ENCODE measurements at regions of chr17 and their contacts with region 1.

Region 1: DNA sequence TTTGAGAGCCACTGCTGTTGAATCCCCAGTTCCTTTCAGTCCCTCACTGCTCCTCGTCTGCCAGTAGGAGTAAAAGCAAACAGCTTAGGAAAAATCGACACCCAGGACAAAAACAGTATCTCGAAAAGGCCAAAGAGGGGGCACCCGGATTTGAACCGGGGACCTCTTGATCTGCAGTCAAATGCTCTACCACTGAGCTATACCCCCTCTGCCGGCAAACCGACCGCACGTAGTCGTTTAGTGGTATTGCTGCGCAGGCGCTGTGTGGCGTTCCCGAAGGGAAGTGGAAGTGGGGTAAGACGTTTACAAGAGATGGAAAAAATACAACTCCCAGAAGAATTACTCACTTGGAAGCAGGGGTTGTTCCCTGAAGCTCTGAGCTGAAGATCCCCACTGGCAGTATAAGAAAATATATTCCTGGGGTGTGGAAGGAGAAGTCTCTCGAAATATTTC is 2.2 kb upstream of the PLXDC1 start:
- DNase-seq: peak; percentile 71
- ATAC-seq: peak; percentile 73
- H3K4me3 ChIP-seq: peak overlapping the region; percentile 87
- H3K27ac ChIP-seq: peak overlapping the region; percentile 62
- H3K4me1 ChIP-seq: peaks cover 8% of the 10 kb centered on the region
- H3K27me3 ChIP-seq: peaks cover 5 to 13% of the 10 kb centered on the region in 2 experiments
- CTCF ChIP-seq: no peak
- EP300 ChIP-seq: no peak; a peak in 1 of 4 replicates
- POLR2A ChIP-seq: no peak
- RAD21 ChIP-seq: no peak

Region 2: GRCh38 chr17:38674749-38675615 is 478.6 kb before region 1 on chr17 and contains the start of gene EPOP:
- CTCF ChIA-PET with region 1: interaction called, 12 read pairs
- POLR2A ChIA-PET with region 1: no interaction called
- RAD21 ChIA-PET with region 1: interaction called, 4 read pairs
- SMC1A ChIA-PET with region 1: no interaction called
- in situ Hi-C with region 1: no loop called
- intact Hi-C with region 1: no loop called
- DNase-seq: no peak
- ATAC-seq: peak; percentile 88
- H3K4me3 ChIP-seq: peak within 1 kb of the TSS; percentile 84
- H3K27ac ChIP-seq: no peak within 1 kb of the TSS
- H3K4me1 ChIP-seq: peaks cover 34% of the 10 kb centered on the region
- H3K27me3 ChIP-seq: peaks cover 8 to 12% of the 10 kb centered on the region in 2 experiments; a peak in 2 of 4 replicates
- CTCF ChIP-seq: no peak
- EP300 ChIP-seq: no peak
- POLR2A ChIP-seq: peak; percentile 62
- RAD21 ChIP-seq: no peak
- polyA plus RNA-seq, gene EPOP: 0.53 to 1.4 TPM

Region 3: GRCh38 chr17:38868817-38869525 is 284.7 kb before region 1 on chr17:
- CTCF ChIA-PET with region 1: interaction called, 15 read pairs
- POLR2A ChIA-PET with region 1: interaction called, 3 read pairs
- RAD21 ChIA-PET with region 1: interaction called, 33 read pairs
- SMC1A ChIA-PET with region 1: interaction called, 23 read pairs
- in situ Hi-C with region 1: no loop called
- intact Hi-C with region 1: loop called (anchors 5 kb)
- DNase-seq: peak; percentile 77
- ATAC-seq: peak; percentile 62
- H3K4me3 ChIP-seq: peak overlapping the region; percentile 87
- H3K27ac ChIP-seq: peak overlapping the region; percentile 98
- H3K4me1 ChIP-seq: peaks cover 19% of the 10 kb centered on the region
- H3K27me3 ChIP-seq: no peaks in the 10 kb centered on the region
- CTCF ChIP-seq: peak; percentile 43 to 49 (median 46)
- EP300 ChIP-seq: peak in 1 of 2 experiments; percentile 46; a peak in 1 of 4 replicates
- POLR2A ChIP-seq: peak; percentile 92
- RAD21 ChIP-seq: 0 out of 2 replicates have a peak, but pooled peaks have one; percentile 16

Region 4: GRCh38 chr17:39057701-39058206 is 95.9 kb before region 1 on chr17:
- CTCF ChIA-PET with region 1: interaction called, 15 read pairs
- POLR2A ChIA-PET with region 1: interaction called, 9 read pairs
- RAD21 ChIA-PET with region 1: interaction called, 19 read pairs
- SMC1A ChIA-PET with region 1: interaction called, 12 read pairs
- in situ Hi-C with region 1: no loop called
- intact Hi-C with region 1: loop called (anchors 1 kb)
- DNase-seq: no peak
- ATAC-seq: no peak
- H3K4me3 ChIP-seq: peak overlapping the region; percentile 43; the same call in 1 of the 2 replicates
- H3K27ac ChIP-seq: no peak overlapping the region
- H3K4me1 ChIP-seq: 0 out of 2 replicates have a peak, but pooled peaks cover 4% of the 10 kb centered on the region
- H3K27me3 ChIP-seq: no peaks in the 10 kb centered on the region
- CTCF ChIP-seq: no peak
- EP300 ChIP-seq: no peak
- POLR2A ChIP-seq: no peak
- RAD21 ChIP-seq: no peak

Region 5: GRCh38 chr17:39164675-39165143 is 11.1 kb after region 1 on chr17:
- CTCF ChIA-PET with region 1: interaction called, 128 read pairs
- POLR2A ChIA-PET with region 1: interaction called, 9 read pairs
- RAD21 ChIA-PET with region 1: interaction called, 40 read pairs
- SMC1A ChIA-PET with region 1: interaction called, 47 read pairs
- in situ Hi-C with region 1: no loop called
- intact Hi-C with region 1: no loop called
- DNase-seq: peak; percentile 53
- ATAC-seq: peak; percentile 98
- H3K4me3 ChIP-seq: peak overlapping the region; percentile 71
- H3K27ac ChIP-seq: no peak overlapping the region
- H3K4me1 ChIP-seq: peaks cover 9% of the 10 kb centered on the region
- H3K27me3 ChIP-seq: peaks cover 0 to 2% of the 10 kb centered on the region in 2 experiments; a peak in 2 of 4 replicates
- CTCF ChIP-seq: peak; percentile 83 to 95 (median 89)
- EP300 ChIP-seq: no peak
- POLR2A ChIP-seq: no peak
- RAD21 ChIP-seq: peak; percentile 33; the same call in 1 of the 2 replicates

Region 6: DNA sequence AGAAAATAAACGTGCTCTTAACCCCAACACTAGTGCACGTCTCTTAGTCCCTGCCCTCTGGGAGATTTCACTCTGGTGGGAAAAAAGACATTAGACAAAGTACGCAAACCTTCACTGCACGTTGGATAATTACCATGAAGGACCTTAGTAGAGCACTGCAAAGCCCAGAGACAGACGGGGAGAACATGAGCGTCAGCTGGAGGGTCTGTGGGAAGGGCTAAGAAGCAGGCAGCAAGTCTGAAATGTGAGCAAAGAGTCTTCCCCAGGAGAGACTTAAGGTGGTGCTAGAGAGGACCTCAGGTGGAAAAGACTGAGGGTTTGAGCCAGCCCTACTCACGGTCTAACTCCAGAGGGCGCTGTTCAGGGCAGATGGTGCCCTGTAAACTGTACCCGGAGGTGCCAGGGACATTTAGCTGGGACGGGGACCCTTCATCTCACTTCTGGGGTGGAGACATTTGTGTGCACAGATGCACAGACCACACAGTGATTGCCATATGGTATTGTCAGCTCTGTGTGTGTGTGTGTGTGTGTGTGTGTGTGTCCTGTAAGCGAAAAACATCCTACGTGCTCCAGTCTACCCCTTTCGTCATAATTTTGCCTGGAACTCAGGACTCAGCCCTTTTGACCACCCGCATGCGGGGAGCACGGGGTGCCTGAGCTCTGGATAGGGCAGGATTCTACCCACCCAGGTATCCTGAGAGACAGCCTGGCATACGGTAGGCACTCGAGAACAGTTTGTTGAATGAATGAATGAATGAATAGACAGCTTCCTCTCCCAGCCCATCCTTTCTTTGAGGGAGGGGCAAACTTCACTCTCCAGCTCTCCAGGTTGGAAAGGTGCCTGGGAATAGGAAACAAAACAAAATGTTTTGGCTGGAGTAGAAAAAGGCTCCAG is 82.2 kb after region 1 on chr17:
- CTCF ChIA-PET with region 1: interaction called, 10 read pairs
- POLR2A ChIA-PET with region 1: no interaction called
- RAD21 ChIA-PET with region 1: interaction called, 5 read pairs
- SMC1A ChIA-PET with region 1: interaction called, 8 read pairs
- in situ Hi-C with region 1: no loop called
- intact Hi-C with region 1: loop called (anchors 5 kb)
- DNase-seq: peak; percentile 24
- ATAC-seq: peak; percentile 88
- H3K4me3 ChIP-seq: no peak overlapping the region
- H3K27ac ChIP-seq: no peak overlapping the region
- H3K4me1 ChIP-seq: no peaks in the 10 kb centered on the region
- H3K27me3 ChIP-seq: no peaks in the 10 kb centered on the region; a peak in 3 of 4 replicates
- CTCF ChIP-seq: peak; percentile 63 to 95 (median 86)
- EP300 ChIP-seq: no peak
- POLR2A ChIP-seq: no peak
- RAD21 ChIP-seq: peak; percentile 31; the same call in 1 of the 2 replicates